Left cardiac atrium (tissue), 4 donors: ENCODE measurements at regions of chr1 and their contacts with region 1.

Region 1: DNA sequence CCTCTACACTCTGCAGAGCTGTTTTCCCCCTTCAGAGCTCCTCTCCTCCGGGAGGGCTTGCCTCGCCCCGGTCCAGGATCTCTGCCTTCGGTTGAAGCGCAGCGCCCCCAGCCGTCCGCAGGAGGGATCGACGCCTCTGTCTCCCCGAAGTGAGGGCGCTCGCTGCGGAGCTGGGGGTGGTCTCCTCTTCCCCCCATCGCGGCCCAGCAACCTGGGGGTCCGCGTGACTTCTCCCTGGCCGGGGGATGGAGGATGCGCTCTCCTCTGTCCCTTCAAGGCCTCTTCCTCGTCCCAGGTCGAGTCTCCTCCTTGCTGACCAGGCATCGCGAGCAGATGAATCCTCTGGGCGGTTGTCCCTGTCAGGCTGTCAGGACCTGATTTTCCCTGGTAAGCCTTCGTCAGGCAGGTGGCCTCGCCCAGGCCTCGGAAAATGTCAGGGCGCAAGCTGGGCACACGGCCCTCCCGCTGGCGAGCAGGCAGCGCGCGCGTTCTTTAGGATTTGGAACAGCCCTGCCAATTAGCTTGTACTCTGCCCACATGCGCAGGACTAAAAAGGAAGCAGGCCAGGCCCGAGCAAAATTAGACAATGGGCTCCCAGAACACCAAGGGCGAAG is 90.5 kb downstream of the EDEM3 start:
- DNase-seq: peak; percentile 82
- ATAC-seq: peak; percentile 95 to 96

Region 2: GRCh38 chr1:184075055-184076029 is 588.8 kb before region 1 on chr1:
- intact Hi-C with region 1: loop called in 1 of 2 experiments (anchors 10 kb)
- DNase-seq: no peak
- ATAC-seq: peak; percentile 88 to 90

Region 3: DNA sequence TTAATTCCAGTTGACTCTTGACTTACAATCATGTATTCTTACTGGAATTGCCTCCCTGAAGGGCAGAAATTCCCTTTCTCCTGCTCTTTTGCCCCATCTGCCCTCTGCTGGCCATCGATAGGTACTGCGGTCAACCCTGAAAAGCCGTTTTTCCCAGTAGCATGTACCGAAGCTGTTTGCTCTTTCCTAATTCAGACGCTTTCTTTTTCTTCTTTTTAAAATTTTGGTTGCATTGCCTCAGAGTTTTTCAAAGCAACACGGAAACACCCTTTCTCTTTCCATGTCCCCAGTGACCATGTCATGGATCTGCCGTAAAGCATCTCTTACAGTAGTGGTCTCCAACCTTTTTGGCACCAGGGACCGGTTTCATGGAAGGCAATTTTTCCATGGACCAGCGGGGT is 441.5 kb before region 1 on chr1:
- intact Hi-C with region 1: loop called in 1 of 2 experiments (anchors 10 kb)
- DNase-seq: peak; percentile 37
- ATAC-seq: peak; percentile 60

Region 4: GRCh38 chr1:184386312-184387068 is 277.7 kb before region 1 on chr1 and contains the start of gene C1orf21:
- intact Hi-C with region 1: loop called in 1 of 2 experiments (anchors 10 kb)
- DNase-seq: peak; percentile 91
- ATAC-seq: peak; percentile 97 to 98
- total RNA-seq, gene C1orf21: 61.3 to 80.7 TPM

Region 5: DNA sequence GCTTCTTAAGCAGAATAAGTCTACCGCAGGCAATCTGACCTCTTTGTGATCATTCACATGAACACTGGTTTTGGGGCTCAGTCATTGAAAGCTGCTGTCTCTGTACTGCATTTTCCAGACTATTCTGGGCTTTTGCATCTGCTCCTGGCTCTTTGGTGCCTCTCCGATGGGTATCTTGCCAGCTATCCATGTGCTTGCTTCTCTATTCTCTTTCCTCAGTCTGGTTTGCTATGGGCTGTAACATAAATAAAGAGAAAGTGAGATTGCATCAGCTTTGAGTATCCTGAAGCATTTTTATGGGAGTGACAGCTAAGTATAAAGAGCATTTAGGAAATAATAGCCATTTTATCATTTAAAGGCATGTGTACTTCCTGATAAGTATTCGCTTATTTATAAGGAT is 206.6 kb before region 1 on chr1:
- intact Hi-C with region 1: loop called in 1 of 2 experiments (anchors 10 kb)
- DNase-seq: no peak
- ATAC-seq: no peak

Region 6: GRCh38 chr1:184563308-184563707 is 100.8 kb before region 1 on chr1:
- intact Hi-C with region 1: loop called in 1 of 2 experiments (anchors 10 kb)
- DNase-seq: no peak
- ATAC-seq: peak; percentile 43 to 64

Region 7: GRCh38 chr1:184716158-184716557 is 52.0 kb after region 1 on chr1:
- intact Hi-C with region 1: no loop called
- DNase-seq: no peak
- ATAC-seq: no peak